MCF 10A (cell line): ENCODE measurements at regions of chr4 and their contacts with region 1.

Region 1: GRCh38 chr4:2262143-2262943 is 434 bp upstream of the MXD4 start:
- DNase-seq: peak; percentile 99
- H3K4me3 Mint-ChIP-seq: peak overlapping the region; percentile 73
- H3K27ac Mint-ChIP-seq: peak overlapping the region; percentile 77
- H3K4me1 Mint-ChIP-seq: peaks cover 8% of the 10 kb centered on the region
- H3K27me3 Mint-ChIP-seq: no peaks in the 10 kb centered on the region
- CTCF ChIP-seq: no peak

Region 2: DNA sequence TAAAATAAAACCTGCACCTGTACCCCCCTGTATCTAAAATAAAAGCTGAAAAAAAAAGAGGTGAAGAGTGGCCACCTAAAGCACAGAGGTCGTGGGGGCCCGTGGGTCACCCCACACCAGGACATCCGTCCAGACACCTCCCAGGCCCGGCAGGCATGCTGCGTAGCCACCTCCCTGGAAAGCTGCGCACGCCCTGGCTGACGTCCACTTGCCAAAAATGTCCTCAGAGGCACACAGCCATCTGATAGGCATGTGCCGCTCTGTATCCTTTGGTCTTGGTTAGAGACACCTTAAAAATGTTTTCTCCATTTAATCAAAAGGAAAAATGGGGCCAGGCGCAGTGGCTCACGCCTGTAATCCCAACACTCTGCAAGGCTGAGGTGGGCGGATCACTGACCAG is 596.0 kb before region 1 on chr4:
- CTCF ChIA-PET with region 1: no interaction called
- POLR2A ChIA-PET with region 1: no interaction called
- intact Hi-C with region 1: no loop called
- DNase-seq: peak; percentile 50
- H3K4me3 Mint-ChIP-seq: no peak overlapping the region
- H3K27ac Mint-ChIP-seq: no peak overlapping the region
- H3K4me1 Mint-ChIP-seq: no peaks in the 10 kb centered on the region
- H3K27me3 Mint-ChIP-seq: no peaks in the 10 kb centered on the region
- CTCF ChIP-seq: no peak

Region 3: DNA sequence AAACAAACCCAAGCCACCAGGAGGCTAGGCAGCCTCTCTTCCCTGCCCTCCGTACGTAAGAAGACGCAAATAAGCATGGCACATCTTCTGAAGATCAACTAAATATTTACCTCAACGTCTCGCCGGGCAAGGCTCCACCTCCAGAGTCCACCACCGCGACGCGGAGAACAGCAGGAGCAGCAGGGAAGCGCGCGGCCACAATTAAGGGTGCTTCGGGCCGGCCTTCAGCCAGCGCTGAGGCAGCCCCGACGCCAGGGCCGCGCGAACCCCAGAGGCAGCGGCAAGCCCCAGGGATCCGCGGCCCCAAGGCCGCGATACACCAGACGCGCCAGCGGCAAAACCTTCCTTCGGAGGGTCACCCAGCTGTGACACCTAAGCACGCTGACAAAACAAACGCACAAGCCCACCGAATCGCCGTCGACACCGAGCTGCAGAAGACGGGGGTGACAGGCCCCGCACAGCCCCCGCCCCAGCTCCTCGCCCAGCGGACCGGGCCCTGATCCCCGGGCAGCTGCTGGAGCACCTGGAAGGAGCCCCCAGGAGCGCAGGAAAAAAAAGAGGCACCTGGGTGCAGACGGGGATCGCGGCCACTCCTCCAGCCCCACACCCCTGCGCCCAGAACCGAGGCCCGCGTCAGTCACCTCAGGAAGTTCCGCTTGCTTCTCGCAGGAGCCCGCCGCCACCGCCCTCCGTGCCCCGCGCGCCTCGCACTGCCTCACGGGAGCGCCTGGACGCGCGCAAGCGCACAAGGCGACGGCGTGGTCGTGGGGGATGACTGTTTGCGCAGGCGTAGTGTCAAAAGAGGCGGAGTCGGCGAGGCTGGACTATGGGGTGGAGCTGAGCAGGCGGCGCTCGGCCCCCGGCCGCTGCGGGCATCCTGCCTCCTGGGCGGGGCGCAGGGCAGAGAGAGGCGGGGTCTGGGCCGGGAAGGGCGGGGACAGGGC is 20.7 kb before region 1 on chr4 and contains the starts of genes HAUS3 and POLN:
- CTCF ChIA-PET with region 1: no interaction called
- POLR2A ChIA-PET with region 1: interaction called, 54 read pairs
- intact Hi-C with region 1: no loop called
- DNase-seq: peak; percentile 98
- H3K4me3 Mint-ChIP-seq: peak within 1 kb of the TSS; percentile 80
- H3K27ac Mint-ChIP-seq: peak within 1 kb of the TSS; percentile 90
- H3K4me1 Mint-ChIP-seq: peaks cover 43% of the 10 kb centered on the region
- H3K27me3 Mint-ChIP-seq: no peaks in the 10 kb centered on the region
- CTCF ChIP-seq: no peak
- total RNA-seq, gene HAUS3: 13.3 and 13.9 TPM in 2 replicates
- total RNA-seq, gene POLN: 2.8 and 3.1 TPM in 2 replicates

Region 4: GRCh38 chr4:2251073-2251794 is 11.1 kb before region 1 on chr4:
- CTCF ChIA-PET with region 1: no interaction called
- POLR2A ChIA-PET with region 1: interaction called, 10 read pairs
- intact Hi-C with region 1: no loop called
- DNase-seq: no peak
- H3K4me3 Mint-ChIP-seq: no peak overlapping the region
- H3K27ac Mint-ChIP-seq: no peak overlapping the region
- H3K4me1 Mint-ChIP-seq: peaks cover under 1% of the 10 kb centered on the region
- H3K27me3 Mint-ChIP-seq: no peaks in the 10 kb centered on the region
- CTCF ChIP-seq: no peak

Region 5: DNA sequence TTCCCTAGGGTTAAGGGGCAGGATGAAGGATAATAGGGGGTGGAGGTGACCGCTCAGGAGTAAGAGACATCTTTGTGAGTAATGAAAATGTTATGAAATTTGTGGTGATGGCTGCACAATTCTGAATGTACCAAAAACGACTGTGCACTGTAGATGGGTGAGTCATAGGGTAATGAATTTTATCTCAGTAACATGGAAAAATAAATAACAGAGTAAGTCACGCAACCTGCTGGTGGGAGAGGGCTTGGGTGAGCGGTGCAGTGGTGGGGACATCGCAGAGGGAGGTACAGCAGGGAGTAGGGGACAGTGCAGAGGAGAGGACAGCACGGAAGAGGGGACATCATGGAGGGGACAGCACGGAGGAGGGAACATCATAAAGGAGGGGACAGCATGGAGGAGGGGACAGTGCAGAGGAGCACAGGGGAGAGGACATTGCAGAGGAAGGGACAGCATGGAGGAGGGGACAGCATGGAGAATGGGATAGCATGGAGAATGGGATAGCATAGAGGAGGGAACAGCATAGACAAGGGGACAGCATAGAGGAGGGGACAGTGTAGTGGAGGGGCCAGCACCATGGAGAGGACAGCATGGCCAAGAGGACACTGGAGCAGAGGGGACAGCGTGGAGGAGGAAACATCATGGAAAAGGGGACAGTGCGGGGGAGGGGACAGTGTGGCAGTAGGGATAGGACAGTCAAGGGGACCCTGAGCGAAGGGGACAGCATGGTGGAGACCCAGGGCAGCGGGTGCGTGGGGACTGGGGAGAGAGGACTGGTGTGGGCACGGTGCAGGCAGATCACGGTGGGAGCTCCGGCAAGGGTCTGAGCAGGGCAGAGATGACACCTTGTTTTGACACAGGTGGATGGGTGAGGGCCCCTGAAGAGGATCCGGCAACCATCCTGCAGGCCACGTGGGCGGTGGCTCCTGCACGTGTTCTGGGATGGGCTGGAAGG is 68.0 kb after region 1 on chr4:
- CTCF ChIA-PET with region 1: no interaction called
- POLR2A ChIA-PET with region 1: interaction called, 6 read pairs
- intact Hi-C with region 1: loop called (anchors 10 kb)
- DNase-seq: peak; percentile 89
- H3K4me3 Mint-ChIP-seq: peak overlapping the region; percentile 42
- H3K27ac Mint-ChIP-seq: peak overlapping the region; percentile 87
- H3K4me1 Mint-ChIP-seq: peaks cover 15% of the 10 kb centered on the region
- H3K27me3 Mint-ChIP-seq: no peaks in the 10 kb centered on the region
- CTCF ChIP-seq: no peak

Region 6: GRCh38 chr4:2412885-2413716 is 150.8 kb after region 1 on chr4:
- CTCF ChIA-PET with region 1: no interaction called
- POLR2A ChIA-PET with region 1: interaction called, 12 read pairs
- intact Hi-C with region 1: loop called (anchors 5 kb)
- DNase-seq: peak; percentile 94
- H3K4me3 Mint-ChIP-seq: peak overlapping the region; percentile 71
- H3K27ac Mint-ChIP-seq: peak overlapping the region; percentile 90
- H3K4me1 Mint-ChIP-seq: peaks cover 10% of the 10 kb centered on the region
- H3K27me3 Mint-ChIP-seq: peaks cover 11% of the 10 kb centered on the region
- CTCF ChIP-seq: peak; percentile 52